ENCODE measurements at regions of chr20 and their contacts with region 1.

Region 1: GRCh38 chr20:45436732-45437391 is 20.9 kb downstream of the PIGT start:
- DNase-seq: no peak
- H3K4me3 ChIP-seq: peak overlapping the region; percentile 60
- CTCF ChIP-seq: peak; percentile 95

Region 2: DNA sequence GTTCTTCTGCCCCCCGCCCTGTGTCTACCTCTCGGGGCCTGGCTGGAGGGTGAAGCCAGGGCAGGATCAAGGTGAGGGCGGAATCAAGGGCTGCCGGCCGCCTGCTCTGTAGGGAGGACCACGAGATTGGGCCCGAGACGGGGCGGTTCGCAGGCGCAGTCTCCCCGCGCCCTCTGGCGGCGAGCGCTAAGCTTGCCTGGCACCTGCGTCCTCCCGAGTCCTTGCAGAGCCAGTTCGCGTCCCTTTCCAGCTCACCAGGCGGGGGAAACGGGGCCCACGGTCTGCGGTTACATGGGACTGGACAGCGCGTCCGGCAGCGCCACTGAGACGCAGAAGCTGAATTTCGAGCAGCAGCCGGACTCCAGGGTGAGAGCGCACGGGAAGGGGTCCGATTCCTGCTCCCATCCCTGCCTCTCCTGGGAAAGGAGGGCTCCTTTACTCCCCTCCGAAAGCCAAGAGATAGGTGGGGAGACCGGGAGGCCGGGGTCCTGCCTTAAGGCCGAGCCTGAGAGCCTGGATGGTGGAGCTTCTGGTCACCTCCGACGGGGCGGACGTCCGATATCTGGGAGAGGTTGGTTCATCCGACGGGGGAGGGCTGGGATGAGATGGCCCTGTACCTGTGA is 125.2 kb before region 1 on chr20:
- CTCF ChIA-PET with region 1: interaction called, 460 read pairs
- POLR2A ChIA-PET with region 1: no interaction called
- DNase-seq: no peak
- H3K4me3 ChIP-seq: no peak overlapping the region
- CTCF ChIP-seq: peak; percentile 94

Region 3: GRCh38 chr20:45347936-45348778 is 88.7 kb before region 1 on chr20 and contains the start of gene SDC4:
- CTCF ChIA-PET with region 1: interaction called, 25 read pairs
- POLR2A ChIA-PET with region 1: interaction called, 3 read pairs
- DNase-seq: no peak
- H3K4me3 ChIP-seq: peak within 1 kb of the TSS; percentile 84
- CTCF ChIP-seq: no peak

Region 4: GRCh38 chr20:45373353-45374100 is 63.3 kb before region 1 on chr20:
- CTCF ChIA-PET with region 1: interaction called, 178 read pairs
- POLR2A ChIA-PET with region 1: interaction called, 7 read pairs
- DNase-seq: no peak
- H3K4me3 ChIP-seq: peak overlapping the region; percentile 55
- CTCF ChIP-seq: peak; percentile 95

Region 5: DNA sequence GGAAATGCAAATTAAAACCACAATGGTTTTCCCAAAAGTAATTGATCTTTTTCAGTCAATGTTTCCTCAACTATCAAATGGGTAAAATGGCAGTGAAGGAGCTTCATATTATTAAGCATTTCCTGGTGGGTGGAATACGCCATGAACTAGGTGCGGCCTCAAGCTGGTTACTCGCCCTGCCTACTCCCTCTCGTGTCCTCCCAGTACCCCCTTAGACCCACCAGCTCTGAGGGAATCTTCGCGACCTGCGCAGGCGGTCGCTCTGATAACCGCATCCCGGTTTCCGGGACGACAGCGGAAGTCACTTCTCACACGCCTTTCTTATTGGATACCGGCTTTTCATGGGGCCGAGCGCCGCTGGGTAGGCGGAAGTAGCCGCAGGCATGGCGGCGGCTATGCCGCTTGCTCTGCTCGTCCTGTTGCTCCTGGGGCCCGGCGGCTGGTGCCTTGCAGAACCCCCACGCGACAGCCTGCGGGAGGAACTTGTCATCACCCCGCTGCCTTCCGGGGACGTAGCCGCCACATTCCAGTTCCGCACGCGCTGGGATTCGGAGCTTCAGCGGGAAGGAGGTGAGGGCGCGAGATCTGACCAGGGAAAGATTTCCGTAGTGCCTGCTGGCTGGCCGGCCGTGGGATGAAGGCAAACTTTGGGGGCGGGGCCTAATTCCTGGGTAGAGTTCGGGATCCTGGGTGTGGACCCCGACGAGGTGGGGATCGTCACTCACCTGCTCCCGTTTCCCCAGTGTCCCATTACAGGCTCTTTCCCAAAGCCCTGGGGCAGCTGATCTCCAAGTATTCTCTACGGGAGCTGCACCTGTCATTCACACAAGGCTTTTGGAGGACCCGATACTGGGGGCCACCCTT is 20.9 kb before region 1 on chr20 and contains the start of gene PIGT:
- CTCF ChIA-PET with region 1: interaction called, 40 read pairs
- POLR2A ChIA-PET with region 1: interaction called, 3 read pairs
- DNase-seq: no peak
- H3K4me3 ChIP-seq: peak within 1 kb of the TSS; percentile 97
- CTCF ChIP-seq: no peak

Measured in AG04449 (cell line).